ENCODE measurements at regions of chr17 and their contacts with region 1.

Region 1: GRCh38 chr17:77186141-77186604 is 45.4 kb downstream of the SEC14L1 start:
- DNase-seq: peak in 1 of 9 donors; percentile 27
- ATAC-seq: peak; percentile 43
- H3K4me3 ChIP-seq: no peak overlapping the region
- H3K4me3 Mint-ChIP-seq: no peak overlapping the region
- H3K27ac ChIP-seq: no peak overlapping the region
- H3K27ac Mint-ChIP-seq: no peak overlapping the region
- H3K4me1 ChIP-seq: peaks cover 0 to 51% of the 10 kb centered on the region in 2 donors
- H3K4me1 Mint-ChIP-seq: peaks cover 28 to 58% (median 35%) of the 10 kb centered on the region in 7 donors
- H3K27me3 ChIP-seq: no peaks in the 10 kb centered on the region
- H3K27me3 Mint-ChIP-seq: no peaks in the 10 kb centered on the region

Region 2: GRCh38 chr17:77117415-77117814 is 68.8 kb before region 1 on chr17:
- CTCF ChIA-PET with region 1: no interaction called
- POLR2A ChIA-PET with region 1: no interaction called
- intact Hi-C with region 1: no loop called
- DNase-seq: no peak
- ATAC-seq: no peak
- H3K4me3 ChIP-seq: no peak overlapping the region
- H3K4me3 Mint-ChIP-seq: no peak overlapping the region
- H3K27ac ChIP-seq: no peak overlapping the region
- H3K27ac Mint-ChIP-seq: no peak overlapping the region
- H3K4me1 ChIP-seq: no peaks in the 10 kb centered on the region
- H3K4me1 Mint-ChIP-seq: peaks cover 0 to 11% (median 0%) of the 10 kb centered on the region in 7 donors
- H3K27me3 ChIP-seq: no peaks in the 10 kb centered on the region
- H3K27me3 Mint-ChIP-seq: no peaks in the 10 kb centered on the region

Region 3: GRCh38 chr17:77145612-77146245 is 40.4 kb before region 1 on chr17:
- CTCF ChIA-PET with region 1: no interaction called
- POLR2A ChIA-PET with region 1: interaction called, 15 read pairs
- intact Hi-C with region 1: loop called (anchors 5 kb)
- DNase-seq: no peak
- ATAC-seq: no peak
- H3K4me3 ChIP-seq: no peak overlapping the region
- H3K4me3 Mint-ChIP-seq: peak overlapping the region in 3 of 10 donors; percentile 1 to 59 (median 45)
- H3K27ac ChIP-seq: no peak overlapping the region
- H3K27ac Mint-ChIP-seq: peak overlapping the region in 7 of 9 donors; percentile 1 to 77 (median 65)
- H3K4me1 ChIP-seq: peaks cover 7 to 10% of the 10 kb centered on the region in 2 donors
- H3K4me1 Mint-ChIP-seq: peaks cover 29 to 77% (median 67%) of the 10 kb centered on the region in 7 donors
- H3K27me3 ChIP-seq: no peaks in the 10 kb centered on the region
- H3K27me3 Mint-ChIP-seq: no peaks in the 10 kb centered on the region

Region 4: DNA sequence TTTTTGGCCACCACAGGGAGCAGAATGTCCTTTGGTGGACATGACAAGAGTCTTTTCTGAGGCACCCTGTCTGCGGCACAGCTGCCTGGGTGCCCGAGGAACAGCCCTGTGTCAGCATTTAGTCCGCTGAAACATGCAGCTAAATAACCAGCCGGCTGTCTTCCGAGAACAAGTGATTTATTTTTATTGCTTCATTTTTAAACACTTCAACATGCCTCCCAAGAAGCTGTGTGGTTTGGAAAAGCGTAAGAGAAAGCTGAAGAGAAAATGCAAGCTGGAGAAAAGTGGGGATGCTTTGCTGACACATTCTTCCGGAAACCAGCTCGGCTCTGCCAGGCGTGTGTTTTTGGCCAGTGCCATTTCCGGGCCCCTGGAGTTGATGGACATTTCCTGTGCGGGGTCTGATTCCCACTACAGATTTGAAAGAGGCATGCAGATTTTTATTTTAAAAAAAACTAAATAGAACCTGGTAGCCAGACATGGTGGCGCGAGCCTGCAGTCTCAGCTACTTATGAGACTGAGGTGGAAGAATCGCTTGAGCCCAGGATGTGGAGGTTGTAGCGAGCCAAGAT is 49.3 kb after region 1 on chr17:
- CTCF ChIA-PET with region 1: no interaction called
- POLR2A ChIA-PET with region 1: no interaction called
- intact Hi-C with region 1: loop called in 1 of 2 experiments (anchors 10 kb)
- DNase-seq: peak in 2 of 9 donors; percentile 14 to 20
- ATAC-seq: peak; percentile 27
- H3K4me3 ChIP-seq: peak overlapping the region; percentile 24
- H3K4me3 Mint-ChIP-seq: peak overlapping the region; percentile 70 to 87 (median 79)
- H3K27ac ChIP-seq: no peak overlapping the region
- H3K27ac Mint-ChIP-seq: peak overlapping the region in 6 of 9 donors; percentile 14 to 77 (median 34)
- H3K4me1 ChIP-seq: no peaks in the 10 kb centered on the region
- H3K4me1 Mint-ChIP-seq: peaks cover 5 to 22% (median 9%) of the 10 kb centered on the region in 7 donors
- H3K27me3 ChIP-seq: no peaks in the 10 kb centered on the region
- H3K27me3 Mint-ChIP-seq: no peaks in the 10 kb centered on the region